Right ventricle myocardium superior (tissue), 1 donor: ENCODE measurements at regions of chr13 and their contacts with region 1.

Region 1: DNA sequence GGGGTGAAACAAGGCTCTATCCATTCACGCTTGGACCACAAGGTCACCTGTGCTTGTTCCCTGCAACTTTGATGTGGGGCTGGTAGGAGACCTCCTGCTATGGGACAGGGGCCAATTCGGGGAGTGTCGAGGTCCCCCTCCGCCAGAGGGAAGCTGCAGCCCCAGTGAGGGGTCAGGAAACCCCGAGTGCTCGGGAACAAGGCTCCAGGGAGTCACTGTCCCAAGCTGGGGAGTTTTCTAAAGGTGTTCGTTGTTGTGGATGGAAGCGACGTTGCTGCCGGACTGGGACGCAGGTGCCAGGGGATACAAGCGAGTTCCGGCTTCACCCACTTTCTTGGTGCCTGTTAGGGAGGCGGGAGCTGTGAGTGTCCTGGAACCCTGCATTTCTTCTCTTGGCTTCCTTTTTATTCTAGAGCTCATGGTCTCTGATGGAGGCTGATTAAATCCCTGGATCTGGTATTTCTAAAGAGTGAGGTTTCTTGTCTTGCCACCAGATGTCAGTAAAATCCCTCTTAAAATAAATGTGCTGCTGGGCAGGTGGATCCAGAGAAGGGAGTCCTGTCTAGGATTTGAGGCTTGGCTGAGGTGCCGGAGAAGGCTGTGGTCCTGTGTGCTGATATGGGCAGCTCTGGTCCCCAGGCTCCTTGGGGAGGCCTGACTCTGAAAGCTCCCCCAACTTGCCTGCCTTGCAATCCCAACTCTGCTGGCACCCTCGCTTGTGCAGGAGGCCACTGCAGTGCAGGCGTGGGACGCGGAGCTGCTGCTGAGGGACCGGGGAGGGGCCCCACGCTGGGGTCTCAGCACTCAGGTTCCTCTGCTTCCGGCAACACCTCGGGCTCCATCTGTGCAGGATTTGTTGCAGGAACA is 153.9 kb downstream of the TEX29 start:
- DNase-seq: no peak
- ATAC-seq: peak; percentile 43

Region 2: DNA sequence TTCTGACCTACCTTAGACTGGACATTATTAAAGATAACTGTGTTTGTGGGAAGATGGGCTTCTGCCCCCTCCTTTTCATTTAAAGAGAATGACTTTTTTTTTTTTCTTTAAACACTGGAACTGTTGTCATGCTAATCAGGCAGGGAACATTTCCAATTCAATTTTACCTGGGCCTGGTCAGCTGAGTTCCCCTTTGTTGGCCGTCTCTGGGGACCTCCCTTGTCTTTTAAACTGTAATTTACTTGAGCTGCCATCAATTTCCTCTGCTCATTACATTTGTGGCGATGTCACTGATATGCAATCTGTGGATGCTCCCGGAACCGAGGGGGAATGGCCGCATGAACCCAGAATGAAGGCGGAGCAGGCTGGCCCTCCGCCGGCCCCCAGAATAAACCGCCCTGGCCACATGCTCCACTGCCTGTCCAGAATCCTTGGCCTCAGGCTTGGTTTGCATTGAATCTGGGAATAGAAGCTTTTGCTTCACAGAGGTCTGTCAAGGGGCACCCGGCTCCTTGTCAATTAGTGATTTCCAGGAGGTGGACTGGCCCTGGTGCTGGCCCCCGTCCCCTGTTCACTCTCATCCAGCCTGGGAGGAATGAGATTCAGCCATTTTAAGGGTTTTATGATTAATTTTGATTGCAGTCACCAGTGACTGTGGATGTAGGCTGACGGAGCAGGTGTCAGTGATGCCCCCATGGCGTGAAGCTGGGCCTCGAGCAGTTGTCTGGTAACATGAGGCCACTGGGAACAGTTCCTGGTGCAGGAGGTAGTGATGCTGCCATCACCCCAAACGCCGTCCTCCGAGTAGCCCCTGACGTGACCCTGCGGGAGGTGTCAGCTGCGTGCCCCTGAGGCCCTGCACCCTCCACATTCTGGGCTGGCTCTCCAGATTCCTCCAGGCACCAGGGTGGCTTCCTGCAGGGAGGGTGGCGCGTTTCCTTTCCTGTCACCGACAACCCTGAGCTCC is 123.0 kb after region 1 on chr13:
- intact Hi-C with region 1: no loop called
- DNase-seq: no peak
- ATAC-seq: no peak

Region 3: GRCh38 chr13:112443995-112444860 is 969.9 kb after region 1 on chr13:
- intact Hi-C with region 1: loop called (anchors 2 kb)
- DNase-seq: peak; percentile 69
- ATAC-seq: peak; percentile 84